ENCODE measurements at regions of chr7 and their contacts with region 1.

Region 1: DNA sequence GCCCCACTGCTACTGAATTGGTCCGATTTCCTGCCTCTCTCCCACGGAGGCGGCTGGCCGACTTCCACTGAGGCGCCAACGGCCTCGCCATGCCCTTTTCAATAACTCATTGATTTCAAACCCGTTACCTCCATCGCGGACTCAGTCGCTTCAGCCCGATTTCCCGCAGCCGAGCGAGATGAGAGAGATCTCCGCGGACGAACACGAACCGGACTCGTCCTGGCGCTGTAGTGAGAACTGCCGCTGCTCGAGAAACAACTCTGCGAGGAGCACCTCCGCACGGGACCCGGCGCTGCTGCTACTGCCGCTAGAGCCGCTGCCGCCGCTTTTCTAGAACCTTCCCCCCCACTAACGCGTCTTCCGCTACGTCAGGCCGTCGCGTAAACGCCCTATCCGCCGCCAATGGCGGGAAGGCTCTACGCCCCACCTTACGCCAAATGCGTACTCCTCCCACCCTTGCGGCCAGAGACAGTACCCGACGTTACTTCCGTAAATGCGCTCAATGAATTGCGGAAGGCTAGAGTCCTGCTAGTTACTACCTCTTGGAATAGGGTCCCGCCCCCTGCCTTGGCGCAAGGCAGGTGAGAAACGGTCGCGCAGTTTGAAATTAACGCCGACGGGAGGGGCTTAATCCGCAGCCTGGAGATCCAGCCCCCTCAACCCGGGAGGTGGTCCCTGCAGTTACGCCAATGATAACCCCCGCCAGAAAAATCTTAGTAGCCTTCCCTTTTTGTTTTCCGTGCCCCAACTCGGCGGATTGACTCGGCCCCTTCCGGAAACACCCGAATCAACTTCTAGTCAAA is at the start of gene HNRNPA2B1:
- DNase-seq: peak; percentile 63 to 98 (median 74)
- ATAC-seq: peak; percentile 65
- H3K4me3 ChIP-seq: peak within 1 kb of the TSS; percentile 76
- H3K27ac ChIP-seq: peak within 1 kb of the TSS; percentile 97
- H3K4me1 ChIP-seq: peaks cover 0 to 25% of the 10 kb centered on the region in 2 experiments; a peak in 2 of 5 replicates
- H3K27me3 ChIP-seq: no peaks in the 10 kb centered on the region
- CTCF ChIP-seq: no peak; a peak in 1 of 6 replicates
- EP300 ChIP-seq: peak; percentile 9; the same call in 1 of the 2 replicates
- POLR2A ChIP-seq: peak; percentile 100
- RAD21 ChIP-seq: no peak
- polyA plus RNA-seq, gene HNRNPA2B1: 865 to 1,390 TPM

Region 2: DNA sequence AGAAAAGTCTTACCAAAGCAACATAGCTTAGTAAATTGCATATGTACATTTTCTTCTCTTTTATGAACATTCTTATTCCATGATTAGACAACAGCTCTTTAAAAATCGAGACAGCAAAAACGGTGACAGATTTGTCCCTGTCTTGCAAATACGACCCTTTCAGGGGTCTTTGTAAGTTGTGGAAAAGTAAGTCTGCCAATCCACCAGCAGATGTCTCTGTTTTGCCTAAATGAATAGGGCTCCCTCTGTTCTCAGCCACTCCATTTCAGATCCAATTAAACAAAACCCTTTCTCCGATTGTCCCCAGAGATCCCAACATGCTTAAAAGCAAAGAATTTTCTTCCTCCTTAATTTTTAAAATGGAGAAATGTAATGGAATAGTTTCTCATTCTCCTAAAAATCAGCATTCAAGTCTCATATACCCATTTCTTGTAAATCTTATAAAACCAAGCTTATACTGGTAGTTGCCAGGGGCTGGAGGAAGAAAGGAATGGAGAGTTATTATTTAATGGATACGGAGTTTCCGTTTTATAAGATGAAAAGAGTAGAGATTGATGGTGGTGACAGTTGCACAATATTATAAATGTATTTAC is 109.6 kb before region 1 on chr7:
- CTCF ChIA-PET with region 1: interaction called, 10 read pairs
- POLR2A ChIA-PET with region 1: interaction called, 14 read pairs
- in situ Hi-C with region 1: no loop called
- intact Hi-C with region 1: loop called (anchors 5 kb)
- DNase-seq: peak; percentile 28 to 61 (median 38)
- ATAC-seq: peak; percentile 86
- H3K4me3 ChIP-seq: no peak overlapping the region
- H3K27ac ChIP-seq: no peak overlapping the region
- H3K4me1 ChIP-seq: no peaks in the 10 kb centered on the region; a peak in 1 of 5 replicates
- H3K27me3 ChIP-seq: peaks cover 0 to 5% of the 10 kb centered on the region in 2 experiments; a peak in 1 of 5 replicates
- CTCF ChIP-seq: peak; percentile 63 to 74 (median 69)
- EP300 ChIP-seq: no peak
- POLR2A ChIP-seq: no peak
- RAD21 ChIP-seq: peak; percentile 82 to 88

Region 3: DNA sequence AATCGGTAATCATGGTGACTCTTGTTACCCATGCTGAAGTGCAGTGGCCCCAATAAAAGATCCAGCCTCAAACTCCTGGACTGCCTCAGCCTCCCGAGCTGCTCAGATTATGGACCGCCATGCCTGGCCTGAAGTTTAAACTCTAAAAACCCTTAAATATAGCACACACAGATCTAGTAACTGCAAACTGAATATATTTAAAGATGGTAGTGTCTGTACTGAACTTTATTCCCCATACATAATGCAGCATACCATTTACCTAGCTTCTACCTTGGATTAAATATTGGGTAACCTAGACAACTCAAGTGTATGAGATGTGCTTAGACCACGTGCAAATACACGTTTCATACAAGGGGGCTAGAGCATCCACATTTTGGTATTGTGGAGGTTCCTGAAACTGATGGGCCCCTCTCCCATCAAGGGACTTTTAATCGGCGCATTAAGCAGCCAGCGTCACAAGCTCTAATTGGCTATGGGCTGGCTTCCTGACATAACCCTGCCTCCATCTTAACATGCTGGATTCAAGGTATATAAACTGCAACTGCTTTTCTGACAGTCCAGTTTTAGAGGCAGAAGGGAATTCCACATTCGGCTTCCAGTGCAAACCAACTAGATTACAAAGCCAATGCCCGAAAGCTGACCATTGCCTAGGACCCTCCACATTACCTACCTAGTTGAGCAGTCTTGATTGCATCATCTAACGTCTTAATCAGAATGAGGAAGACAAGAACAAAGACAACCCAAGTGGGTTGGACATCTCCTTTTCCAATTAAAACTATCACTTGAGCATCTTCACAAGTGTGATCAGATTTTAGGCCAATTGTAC is 13.1 kb before region 1 on chr7:
- CTCF ChIA-PET with region 1: interaction called, 3 read pairs
- POLR2A ChIA-PET with region 1: interaction called, 80 read pairs
- in situ Hi-C with region 1: no loop called
- intact Hi-C with region 1: no loop called
- DNase-seq: peak in 2 of 4 experiments; percentile 27 to 60
- ATAC-seq: peak; percentile 50
- H3K4me3 ChIP-seq: no peak overlapping the region
- H3K27ac ChIP-seq: peak overlapping the region; percentile 61
- H3K4me1 ChIP-seq: peaks cover 7 to 29% of the 10 kb centered on the region in 2 experiments; a peak in 4 of 5 replicates
- H3K27me3 ChIP-seq: no peaks in the 10 kb centered on the region
- CTCF ChIP-seq: no peak
- EP300 ChIP-seq: no peak
- POLR2A ChIP-seq: peak; percentile 86
- RAD21 ChIP-seq: no peak; a peak in 1 of 4 replicates

Region 4: GRCh38 chr7:26233902-26234511 is 33.4 kb after region 1 on chr7:
- CTCF ChIA-PET with region 1: no interaction called
- POLR2A ChIA-PET with region 1: interaction called, 23 read pairs
- in situ Hi-C with region 1: no loop called
- intact Hi-C with region 1: no loop called
- DNase-seq: peak; percentile 67 to 88 (median 76)
- ATAC-seq: peak; percentile 90
- H3K4me3 ChIP-seq: no peak overlapping the region
- H3K27ac ChIP-seq: peak overlapping the region; percentile 92
- H3K4me1 ChIP-seq: peaks cover 12 to 34% of the 10 kb centered on the region in 2 experiments; a peak in 4 of 5 replicates
- H3K27me3 ChIP-seq: no peaks in the 10 kb centered on the region
- CTCF ChIP-seq: peak; percentile 20 to 57 (median 41); a peak in 3 of 6 replicates
- EP300 ChIP-seq: peak; percentile 77
- POLR2A ChIP-seq: peak; percentile 49; the same call in 1 of the 2 replicates
- RAD21 ChIP-seq: peak in 1 of 2 experiments; percentile 27; a peak in 3 of 4 replicates

Region 5: DNA sequence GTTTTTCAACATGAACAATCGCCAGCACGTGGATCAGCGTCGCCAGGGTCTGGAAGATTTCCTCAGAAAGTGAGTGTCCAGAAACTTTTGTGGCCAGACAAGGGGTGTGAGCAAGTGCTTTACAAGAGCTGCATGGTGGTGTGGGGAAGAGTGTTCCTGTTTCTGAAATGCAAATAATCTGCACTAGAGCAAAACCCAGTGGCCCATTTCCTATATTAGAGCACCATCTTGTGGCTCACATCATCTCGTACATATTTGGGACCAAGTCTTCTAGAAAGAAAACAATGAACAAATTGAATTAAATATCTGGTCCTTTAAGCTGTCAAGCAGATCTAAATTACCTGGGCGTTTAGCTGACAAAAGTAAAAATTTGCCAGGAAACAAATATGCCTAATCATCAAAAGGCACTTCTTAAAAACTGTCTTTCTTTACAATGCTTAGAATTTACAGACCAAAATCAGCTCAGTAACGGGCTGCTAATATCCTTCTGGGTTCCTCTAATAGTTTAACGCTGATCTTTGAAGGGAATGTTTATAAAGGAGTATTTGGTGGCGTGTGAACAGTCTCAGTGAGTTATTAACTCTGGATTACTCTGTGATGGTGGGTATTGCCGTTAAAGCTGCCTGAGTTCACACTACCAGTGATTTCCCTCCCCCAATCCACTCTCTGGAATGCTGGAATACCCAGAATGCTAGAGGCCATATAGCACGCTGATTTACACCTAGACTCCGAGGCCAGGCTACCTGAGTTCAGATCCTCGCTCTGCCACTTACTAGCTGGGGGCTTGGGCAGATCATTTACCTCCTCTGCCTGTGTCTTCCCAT is 164.6 kb after region 1 on chr7:
- CTCF ChIA-PET with region 1: interaction called, 4 read pairs
- POLR2A ChIA-PET with region 1: interaction called, 11 read pairs
- in situ Hi-C with region 1: no loop called
- intact Hi-C with region 1: loop called (anchors 5 kb)
- DNase-seq: peak; percentile 18 to 78 (median 30)
- ATAC-seq: peak; percentile 86
- H3K4me3 ChIP-seq: no peak overlapping the region
- H3K27ac ChIP-seq: no peak overlapping the region
- H3K4me1 ChIP-seq: no peaks in the 10 kb centered on the region; a peak in 1 of 5 replicates
- H3K27me3 ChIP-seq: no peaks in the 10 kb centered on the region
- CTCF ChIP-seq: peak; percentile 70 to 90 (median 71); a peak in 5 of 6 replicates
- EP300 ChIP-seq: no peak
- POLR2A ChIP-seq: no peak
- RAD21 ChIP-seq: peak; percentile 97 to 98

Measured in K562 (cell line).